ENCODE measurements at regions of chr2 and their contacts with region 1.

Region 1: DNA sequence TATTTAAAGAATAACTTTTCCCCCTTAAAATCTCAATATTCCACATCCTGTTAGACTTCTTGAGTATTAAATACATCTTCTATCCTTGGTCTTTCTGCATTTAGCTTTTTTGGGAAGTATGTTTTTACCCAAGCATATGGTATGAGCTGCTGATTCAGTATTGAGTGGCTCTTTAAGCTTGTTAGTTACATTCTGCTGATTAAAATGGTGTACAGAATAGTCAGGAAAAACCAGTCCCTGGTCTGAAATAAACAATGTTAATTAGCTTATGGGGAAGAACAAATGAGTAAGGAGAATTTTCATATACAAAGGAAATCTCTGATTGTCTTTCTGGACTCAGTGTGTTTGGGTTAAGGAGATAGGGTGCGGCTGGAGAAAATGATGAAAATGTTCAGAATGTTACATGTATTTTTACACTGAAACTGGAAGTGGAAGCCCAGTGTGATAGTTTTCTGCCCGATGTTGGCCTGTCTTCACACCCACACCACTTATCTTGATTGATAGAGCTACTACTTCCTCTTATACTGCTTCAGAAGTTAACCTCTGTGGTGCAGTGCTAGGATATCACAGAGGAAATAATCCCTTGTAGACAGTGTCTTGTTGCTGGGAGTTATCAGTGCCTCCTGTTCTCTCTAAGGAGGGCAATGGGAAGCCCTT is 84.0 kb downstream of the MSH2 start:
- DNase-seq: peak in 1 of 2 donors; percentile 12
- ATAC-seq: peak; percentile 87 to 95 (median 93)
- H3K4me3 ChIP-seq: no peak overlapping the region
- H3K4me3 Mint-ChIP-seq: peak overlapping the region; percentile 79
- H3K27ac ChIP-seq: peak overlapping the region; percentile 55
- H3K27ac Mint-ChIP-seq: peak overlapping the region; percentile 85 to 86
- H3K4me1 ChIP-seq: peaks cover 12% of the 10 kb centered on the region
- H3K4me1 Mint-ChIP-seq: peaks cover 45 to 46% of the 10 kb centered on the region in 2 donors
- H3K27me3 ChIP-seq: no peaks in the 10 kb centered on the region
- H3K27me3 Mint-ChIP-seq: no peaks in the 10 kb centered on the region
- CTCF ChIP-seq: no peak

Region 2: GRCh38 chr2:47403609-47404193 is 83.3 kb before region 1 on chr2:
- intact Hi-C with region 1: no loop called
- DNase-seq: peak in 1 of 2 donors; percentile 14
- ATAC-seq: no peak
- H3K4me3 ChIP-seq: peak overlapping the region; percentile 77
- H3K4me3 Mint-ChIP-seq: peak overlapping the region; percentile 96
- H3K27ac ChIP-seq: no peak overlapping the region
- H3K27ac Mint-ChIP-seq: peak overlapping the region; percentile 83 to 94
- H3K4me1 ChIP-seq: peaks cover 17% of the 10 kb centered on the region
- H3K4me1 Mint-ChIP-seq: peaks cover 31 to 36% of the 10 kb centered on the region in 2 donors
- H3K27me3 ChIP-seq: no peaks in the 10 kb centered on the region
- H3K27me3 Mint-ChIP-seq: no peaks in the 10 kb centered on the region
- CTCF ChIP-seq: no peak

Region 3: DNA sequence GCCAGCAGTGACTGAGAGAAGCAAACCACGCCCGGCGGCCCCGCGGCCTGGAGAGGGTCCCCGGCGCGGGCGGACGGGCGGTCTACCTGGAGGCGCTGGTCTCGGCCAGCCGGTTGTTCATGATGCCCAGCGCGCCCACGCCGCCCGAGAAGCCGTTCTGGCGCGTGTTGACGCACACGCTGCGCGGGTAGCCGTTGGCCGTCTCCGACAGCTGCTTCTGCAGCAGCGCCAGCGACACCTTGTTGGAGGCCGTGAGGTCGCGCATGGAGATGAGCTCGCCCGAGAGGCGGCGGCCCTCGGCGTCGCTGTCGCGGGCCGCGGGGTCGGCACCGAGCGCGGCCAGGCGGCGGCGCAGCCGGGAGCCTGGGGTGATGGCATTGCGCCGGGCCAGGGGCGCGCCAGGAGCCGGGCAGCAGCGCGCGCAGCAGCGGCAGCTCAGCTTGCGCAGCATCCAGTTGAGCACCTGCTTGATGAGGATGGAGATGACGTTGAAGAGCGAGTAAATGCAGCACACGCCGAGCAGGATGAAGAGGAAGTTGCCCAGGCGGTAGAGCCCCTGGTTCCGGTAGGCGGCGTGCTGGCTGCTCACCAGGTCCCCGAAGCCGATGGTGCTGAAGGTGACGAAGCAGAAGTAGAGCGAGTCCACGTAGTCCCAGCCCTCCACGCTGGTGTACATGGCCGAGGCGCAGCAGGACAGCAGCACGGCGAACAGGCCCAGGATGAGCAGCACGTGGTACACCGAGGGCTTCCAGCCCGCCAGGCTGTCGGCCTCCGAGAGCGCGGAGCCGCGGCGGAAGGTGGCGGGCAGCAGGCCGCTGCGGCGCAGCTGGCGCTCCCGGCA is 34.1 kb after region 1 on chr2:
- intact Hi-C with region 1: loop called (anchors 1 kb)
- DNase-seq: peak; percentile 58 to 84
- ATAC-seq: peak; percentile 77 to 85 (median 78)
- H3K4me3 ChIP-seq: peak overlapping the region; percentile 45
- H3K4me3 Mint-ChIP-seq: peak overlapping the region; percentile 95
- H3K27ac ChIP-seq: peak overlapping the region; percentile 63
- H3K27ac Mint-ChIP-seq: peak overlapping the region; percentile 86 to 93
- H3K4me1 ChIP-seq: peaks cover 30% of the 10 kb centered on the region
- H3K4me1 Mint-ChIP-seq: peaks cover 35% of the 10 kb centered on the region in 2 donors
- H3K27me3 ChIP-seq: no peaks in the 10 kb centered on the region
- H3K27me3 Mint-ChIP-seq: no peaks in the 10 kb centered on the region
- CTCF ChIP-seq: peak; percentile 30